ENCODE measurements at regions of chr3 and their contacts with region 1.

Region 1: DNA sequence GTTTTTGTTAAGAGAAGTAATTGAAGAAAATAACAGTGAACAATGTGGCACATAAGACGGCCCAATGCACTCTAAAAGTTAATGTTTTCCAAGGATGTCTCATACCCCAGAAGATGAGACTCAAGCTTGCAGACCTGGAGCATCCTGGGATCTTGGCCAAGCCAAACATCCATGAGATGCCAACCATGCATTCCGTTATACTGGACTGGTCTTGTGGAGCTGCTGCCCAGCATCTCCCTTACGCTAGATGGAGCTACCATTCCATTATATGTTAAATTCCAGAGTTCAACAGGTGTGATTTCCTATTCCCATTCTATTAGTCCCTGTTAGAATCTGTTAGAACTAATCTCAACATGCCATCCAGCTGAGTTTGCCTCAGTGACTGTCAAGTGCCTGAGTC is 181.8 kb downstream of the PDCD6IP start:
- DNase-seq: peak; percentile 30
- H3K4me3 Mint-ChIP-seq: no peak overlapping the region
- H3K27ac Mint-ChIP-seq: no peak overlapping the region
- H3K4me1 Mint-ChIP-seq: no peaks in the 10 kb centered on the region
- H3K27me3 Mint-ChIP-seq: peaks cover 6% of the 10 kb centered on the region
- CTCF ChIP-seq: peak; percentile 19

Region 2: DNA sequence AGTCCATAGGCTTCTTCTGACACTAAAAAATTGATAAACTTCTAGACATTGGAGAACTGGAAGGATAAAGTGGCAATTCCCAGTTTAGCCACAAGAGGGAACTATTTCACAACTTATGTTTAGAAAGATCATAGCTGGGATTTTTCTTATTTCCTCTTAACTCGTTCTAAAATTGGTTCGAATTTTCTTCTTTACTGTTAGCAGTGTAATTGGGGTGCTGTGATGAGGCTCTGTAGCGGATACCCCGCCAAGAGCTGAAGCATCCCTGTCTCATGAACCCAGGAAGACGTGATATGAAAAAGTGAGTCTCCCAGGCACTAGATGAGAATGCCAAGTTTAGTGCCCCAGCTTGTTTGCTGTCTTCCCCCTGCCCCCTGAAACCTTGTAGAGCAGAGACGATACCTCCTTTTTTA is 96.7 kb before region 1 on chr3:
- CTCF ChIA-PET with region 1: interaction called, 12 read pairs
- intact Hi-C with region 1: no loop called
- DNase-seq: peak; percentile 41
- H3K4me3 Mint-ChIP-seq: no peak overlapping the region
- H3K27ac Mint-ChIP-seq: no peak overlapping the region
- H3K4me1 Mint-ChIP-seq: no peaks in the 10 kb centered on the region
- H3K27me3 Mint-ChIP-seq: peaks cover 33% of the 10 kb centered on the region
- CTCF ChIP-seq: peak; percentile 46

Region 3: DNA sequence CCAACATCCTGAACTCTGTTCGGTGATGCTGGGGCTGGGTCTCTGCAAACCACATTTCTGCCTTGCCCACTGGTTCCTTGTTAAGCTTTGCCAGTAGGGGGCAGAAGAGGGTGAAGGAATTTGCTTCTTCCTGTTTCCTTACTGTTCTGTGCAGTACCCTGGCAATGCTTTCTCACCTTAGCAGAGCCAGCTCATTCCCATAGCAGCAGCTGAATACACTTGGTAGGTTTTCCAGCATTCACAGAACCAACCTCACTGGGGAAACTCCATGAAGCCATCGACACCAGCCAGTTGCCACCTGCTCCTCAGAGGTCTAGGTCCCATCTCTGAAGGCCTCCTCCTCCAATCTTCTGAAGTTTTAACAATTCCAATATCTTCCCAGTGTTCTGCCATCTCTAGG is 126.6 kb after region 1 on chr3:
- CTCF ChIA-PET with region 1: no interaction called
- intact Hi-C with region 1: loop called (anchors 5 kb)
- DNase-seq: peak; percentile 55
- H3K4me3 Mint-ChIP-seq: no peak overlapping the region
- H3K27ac Mint-ChIP-seq: no peak overlapping the region
- H3K4me1 Mint-ChIP-seq: no peaks in the 10 kb centered on the region
- H3K27me3 Mint-ChIP-seq: peaks cover 38% of the 10 kb centered on the region
- CTCF ChIP-seq: no peak

Region 4: DNA sequence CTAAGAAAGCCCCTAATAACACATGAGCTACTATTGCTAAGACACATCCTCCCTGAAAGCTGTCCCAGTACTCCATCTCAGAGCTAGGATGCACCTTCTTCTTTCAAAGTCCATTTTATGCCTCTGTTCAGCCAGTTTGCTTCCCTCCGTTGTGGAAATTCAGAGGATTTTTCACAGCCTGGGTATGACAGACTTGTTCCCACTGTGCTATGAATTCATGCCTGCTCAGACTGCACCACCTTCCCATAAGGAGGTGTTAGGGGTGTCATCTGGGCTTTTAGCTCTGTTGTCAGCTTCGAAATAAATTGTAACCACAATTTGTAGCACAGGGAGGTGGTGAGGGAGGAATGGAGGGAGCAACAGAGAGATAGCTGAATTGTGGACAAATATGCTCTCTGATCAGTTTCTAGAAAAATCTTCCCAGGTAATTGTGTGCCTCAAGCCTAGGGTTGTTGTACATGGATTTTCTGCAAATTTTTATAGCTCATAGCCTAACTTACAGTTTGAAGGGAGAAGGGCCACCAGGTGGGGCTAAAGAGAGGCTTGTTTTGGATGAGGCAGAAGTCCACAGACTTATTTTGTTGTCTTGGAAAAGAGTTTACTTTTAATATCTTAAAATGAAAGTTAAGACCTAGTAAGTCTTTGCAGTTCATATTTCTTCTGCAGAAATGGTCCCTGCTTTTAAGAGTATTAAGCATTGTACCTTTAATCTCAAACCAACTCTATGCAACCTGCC is 280.2 kb after region 1 on chr3:
- CTCF ChIA-PET with region 1: interaction called, 12 read pairs
- intact Hi-C with region 1: no loop called
- DNase-seq: peak; percentile 76
- H3K4me3 Mint-ChIP-seq: no peak overlapping the region
- H3K27ac Mint-ChIP-seq: no peak overlapping the region
- H3K4me1 Mint-ChIP-seq: peaks cover 17% of the 10 kb centered on the region
- H3K27me3 Mint-ChIP-seq: peaks cover 15% of the 10 kb centered on the region
- CTCF ChIP-seq: peak; percentile 37

Region 5: DNA sequence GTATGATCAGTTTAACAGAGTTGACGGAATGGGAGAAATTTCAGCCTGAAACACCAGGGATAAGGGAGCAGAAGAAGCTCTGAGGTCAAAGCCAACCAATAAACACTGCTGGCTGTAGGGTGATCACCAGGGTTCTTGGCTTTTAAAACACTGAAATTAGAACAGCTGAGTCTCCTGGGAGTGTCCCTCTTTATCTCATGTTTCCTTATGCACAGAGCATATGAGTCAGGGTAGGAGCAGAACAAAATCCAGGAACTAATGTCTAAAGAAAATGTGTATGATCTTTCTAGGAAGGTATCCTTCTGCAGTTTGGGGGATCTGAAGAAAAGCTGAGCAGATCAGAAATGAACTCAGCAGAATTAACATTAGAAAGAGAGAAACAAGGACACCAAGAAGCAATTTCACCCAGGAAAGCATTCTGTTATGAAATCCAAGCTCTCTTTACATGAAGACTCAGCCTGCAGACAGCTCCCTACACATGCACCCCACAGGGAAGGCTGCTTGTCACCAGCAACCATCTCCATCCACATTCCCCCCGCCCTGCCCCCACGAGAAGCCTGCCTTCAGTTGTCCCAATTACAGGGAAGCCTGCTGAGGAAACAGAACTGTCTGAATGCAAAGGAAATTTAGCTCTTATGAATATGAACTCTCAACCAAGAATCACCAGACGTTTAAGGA is 287.9 kb after region 1 on chr3:
- CTCF ChIA-PET with region 1: no interaction called
- intact Hi-C with region 1: loop called (anchors 5 kb)
- DNase-seq: no peak
- H3K4me3 Mint-ChIP-seq: no peak overlapping the region
- H3K27ac Mint-ChIP-seq: no peak overlapping the region
- H3K4me1 Mint-ChIP-seq: no peaks in the 10 kb centered on the region
- H3K27me3 Mint-ChIP-seq: peaks cover 36% of the 10 kb centered on the region
- CTCF ChIP-seq: no peak

Region 6: GRCh38 chr3:34387826-34388564 is 407.7 kb after region 1 on chr3:
- CTCF ChIA-PET with region 1: no interaction called
- intact Hi-C with region 1: loop called (anchors 10 kb)
- DNase-seq: no peak
- H3K4me3 Mint-ChIP-seq: no peak overlapping the region
- H3K27ac Mint-ChIP-seq: no peak overlapping the region
- H3K4me1 Mint-ChIP-seq: peaks cover 8% of the 10 kb centered on the region
- H3K27me3 Mint-ChIP-seq: no peaks in the 10 kb centered on the region
- CTCF ChIP-seq: no peak

Measured in Calu3 (cell line).